WTC11 (cell line): ENCODE measurements at regions of chr14 and their contacts with region 1.

Region 1: DNA sequence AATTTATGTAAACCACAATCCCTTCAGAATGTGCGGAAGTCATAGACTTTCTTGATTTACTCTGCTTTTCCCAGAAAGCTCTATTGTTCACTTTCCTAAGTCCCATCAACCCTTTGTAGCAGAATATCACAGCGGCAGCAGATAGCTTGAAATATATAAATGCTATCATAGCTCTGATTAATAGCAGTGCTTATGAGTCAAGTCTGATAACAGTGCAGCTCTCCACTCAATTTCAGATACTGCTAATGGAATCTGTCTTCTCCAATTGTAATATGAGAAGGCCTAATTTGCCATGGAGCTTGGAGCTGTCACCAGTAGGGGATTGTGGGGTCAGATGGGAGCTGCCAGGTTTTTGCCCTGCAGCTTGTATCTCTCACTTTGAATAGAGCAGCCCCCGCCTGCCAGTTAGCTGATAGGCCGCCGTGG is 10.9 kb downstream of the TMEM260 start:
- DNase-seq: peak; percentile 32
- ATAC-seq: peak; percentile 94
- H3K4me3 Mint-ChIP-seq: no peak overlapping the region
- H3K27ac Mint-ChIP-seq: no peak overlapping the region
- H3K4me1 Mint-ChIP-seq: peaks cover 7% of the 10 kb centered on the region
- H3K27me3 Mint-ChIP-seq: no peaks in the 10 kb centered on the region
- CTCF ChIP-seq: no peak

Region 2: GRCh38 chr14:56579345-56580220 is 11.0 kb before region 1 on chr14 and contains the start of gene TMEM260:
- CTCF ChIA-PET with region 1: interaction called, 18 read pairs
- POLR2A ChIA-PET with region 1: interaction called, 4 read pairs
- DNase-seq: peak; percentile 92
- ATAC-seq: peak; percentile 92
- H3K4me3 Mint-ChIP-seq: peak within 1 kb of the TSS; percentile 91
- H3K27ac Mint-ChIP-seq: peak within 1 kb of the TSS; percentile 95
- H3K4me1 Mint-ChIP-seq: peaks cover 11% of the 10 kb centered on the region
- H3K27me3 Mint-ChIP-seq: no peaks in the 10 kb centered on the region; the same call in 1 of the 2 replicates
- CTCF ChIP-seq: peak; percentile 72
- total RNA-seq, gene TMEM260: 17.9 to 22.5 TPM (median 20.4 TPM) in 3 replicates